AG04450 (cell line): ENCODE measurements at regions of chr2 and their contacts with region 1.

Region 1: GRCh38 chr2:72993147-72993932 is 76.0 kb downstream of the EMX1 start:
- DNase-seq: no peak
- H3K4me3 ChIP-seq: no peak overlapping the region
- H3K27ac ChIP-seq: no peak overlapping the region
- H3K27me3 ChIP-seq: no peaks in the 10 kb centered on the region
- CTCF ChIP-seq: peak; percentile 79

Region 2: DNA sequence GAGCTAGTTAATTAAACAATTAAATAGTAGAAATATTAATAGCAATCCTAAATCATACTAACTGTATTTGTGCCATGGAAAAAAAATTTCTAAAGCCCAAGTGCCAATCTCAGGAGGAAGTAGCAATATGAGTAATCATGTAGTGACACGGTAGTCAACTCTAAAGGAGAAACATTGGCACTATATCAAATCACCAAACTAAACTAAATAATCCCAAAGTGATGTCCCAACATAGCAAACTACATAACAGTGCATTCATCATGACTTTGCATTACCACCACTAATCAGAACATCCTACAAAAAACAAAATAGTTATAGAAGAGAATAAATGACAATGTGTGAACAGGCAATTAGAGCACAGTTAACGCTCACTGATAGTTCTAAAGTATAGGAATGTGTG is 362.6 kb before region 1 on chr2:
- CTCF ChIA-PET with region 1: no interaction called
- POLR2A ChIA-PET with region 1: no interaction called
- DNase-seq: no peak
- H3K4me3 ChIP-seq: no peak overlapping the region
- H3K27ac ChIP-seq: no peak overlapping the region
- H3K27me3 ChIP-seq: no peaks in the 10 kb centered on the region
- CTCF ChIP-seq: no peak

Region 3: DNA sequence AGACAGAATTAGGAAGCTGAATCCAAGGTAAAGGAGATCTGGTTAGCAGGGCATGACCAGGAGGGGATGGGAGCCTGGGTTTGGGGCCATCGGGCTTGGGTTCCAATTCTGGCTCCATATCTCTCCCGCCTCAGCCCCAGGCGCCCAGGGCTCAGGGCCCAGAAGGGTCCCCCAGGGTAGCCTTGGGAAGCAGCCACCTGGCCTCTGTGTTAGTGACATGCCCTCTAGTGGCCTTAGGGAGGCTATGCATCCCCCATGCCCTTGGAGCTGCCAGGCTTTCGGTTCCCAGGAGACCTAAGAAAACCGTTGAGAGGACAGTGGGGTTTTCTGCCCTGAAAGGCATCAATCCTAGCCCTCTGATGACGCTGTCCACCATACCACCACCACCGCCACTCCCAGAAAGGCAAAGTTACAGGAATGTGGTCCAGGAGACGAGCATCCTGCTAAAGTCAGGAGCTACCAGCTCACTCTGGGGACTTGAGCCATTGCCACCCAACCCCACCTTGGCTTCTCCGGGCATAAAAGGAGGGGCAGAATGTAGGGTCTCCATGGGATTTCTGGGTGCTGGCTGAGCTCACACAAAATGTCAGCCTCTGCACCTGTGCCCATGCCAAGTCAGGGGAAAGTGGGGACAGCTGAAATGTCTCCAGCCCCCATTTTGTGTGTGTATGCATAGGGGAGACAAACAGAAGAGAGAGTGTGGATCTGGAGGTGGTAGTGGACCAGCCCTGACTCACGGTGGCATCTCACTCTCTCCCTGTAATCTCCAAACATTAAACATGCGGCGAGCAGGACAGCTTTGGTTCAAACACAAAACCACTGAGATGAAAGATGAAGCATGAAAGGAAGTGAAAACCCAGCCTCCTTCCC is 19.5 kb before region 1 on chr2:
- CTCF ChIA-PET with region 1: interaction called, 21 read pairs
- POLR2A ChIA-PET with region 1: no interaction called
- DNase-seq: peak; percentile 24
- H3K4me3 ChIP-seq: no peak overlapping the region
- H3K27ac ChIP-seq: no peak overlapping the region
- H3K27me3 ChIP-seq: no peaks in the 10 kb centered on the region
- CTCF ChIP-seq: peak; percentile 95

Region 4: GRCh38 chr2:73156539-73157124 is 163.3 kb after region 1 on chr2:
- CTCF ChIA-PET with region 1: interaction called, 33 read pairs
- POLR2A ChIA-PET with region 1: no interaction called
- DNase-seq: no peak
- H3K4me3 ChIP-seq: peak overlapping the region; percentile 44
- H3K27ac ChIP-seq: no peak overlapping the region
- H3K27me3 ChIP-seq: peaks cover 11% of the 10 kb centered on the region
- CTCF ChIP-seq: peak; percentile 87

Region 5: DNA sequence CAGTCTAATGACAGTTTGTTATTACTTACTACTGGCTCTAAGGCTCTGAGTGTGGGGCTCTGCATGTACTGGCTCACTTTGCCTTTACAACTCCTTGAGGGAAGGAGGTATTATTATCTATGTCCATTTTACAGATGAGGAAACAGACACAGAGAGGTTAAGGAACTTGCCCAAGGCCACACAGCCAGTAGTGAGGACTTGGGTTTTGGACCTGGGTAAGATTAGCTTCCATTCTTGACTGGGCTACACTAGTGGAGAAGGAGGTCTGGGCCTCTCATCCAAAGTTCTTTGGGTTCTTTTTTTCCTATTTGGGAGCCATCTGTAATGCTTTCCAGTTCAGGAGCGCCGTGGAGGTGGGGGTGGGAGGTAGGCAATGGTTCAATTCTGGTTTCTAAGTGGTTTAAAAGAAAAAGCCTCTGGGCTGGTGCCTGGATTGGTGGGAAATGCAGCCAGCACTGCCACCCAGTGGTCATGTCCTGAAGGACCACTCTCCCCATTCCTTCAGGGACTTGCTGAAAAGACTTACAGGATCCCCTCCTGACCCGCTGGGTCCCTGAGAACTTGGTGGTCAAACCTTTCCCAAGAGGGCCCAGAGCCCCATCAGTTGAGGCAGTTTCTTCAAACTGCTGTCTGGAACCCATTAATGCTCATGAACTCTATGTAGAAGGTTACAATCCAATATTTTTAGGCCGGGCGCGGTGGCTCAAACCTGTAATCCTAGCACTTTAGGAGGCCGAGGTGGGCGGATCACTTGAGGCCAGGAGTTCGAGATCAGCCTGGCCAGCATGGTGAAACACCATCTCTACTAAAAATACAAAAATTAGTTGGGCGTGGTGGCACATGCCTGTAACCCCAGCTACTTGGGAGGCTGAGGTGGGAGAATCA is 170.4 kb after region 1 on chr2:
- CTCF ChIA-PET with region 1: interaction called, 24 read pairs
- POLR2A ChIA-PET with region 1: no interaction called
- DNase-seq: peak; percentile 62
- H3K4me3 ChIP-seq: no peak overlapping the region
- H3K27ac ChIP-seq: no peak overlapping the region
- H3K27me3 ChIP-seq: peaks cover 5% of the 10 kb centered on the region
- CTCF ChIP-seq: peak; percentile 94